G401 (cell line): ENCODE measurements at regions of chr15 and their contacts with region 1.

Region 1: DNA sequence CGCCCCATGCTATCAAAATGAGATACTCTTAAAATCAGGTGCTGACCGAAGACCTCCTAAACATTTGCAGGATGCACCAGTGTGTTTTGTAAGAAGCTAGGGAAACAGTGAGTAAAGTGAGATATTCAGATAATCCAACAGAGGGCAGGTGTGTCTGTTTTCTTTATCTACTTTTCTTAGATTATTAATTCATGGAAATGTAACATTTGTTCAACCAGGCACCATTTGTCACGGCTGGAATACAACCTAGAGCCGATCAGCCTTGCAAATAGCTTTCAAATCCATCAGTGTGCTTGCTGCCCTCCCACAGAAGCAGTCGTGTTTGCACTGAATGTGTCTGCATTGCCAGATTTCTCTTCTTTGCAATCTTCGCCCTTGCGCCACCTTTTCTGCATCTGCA is 201.9 kb upstream of the CHRM5 start:
- DNase-seq: no peak

Region 2: GRCh38 chr15:33693166-33693800 is 73.1 kb before region 1 on chr15:
- in situ Hi-C with region 1: no loop called
- DNase-seq: no peak

Region 3: DNA sequence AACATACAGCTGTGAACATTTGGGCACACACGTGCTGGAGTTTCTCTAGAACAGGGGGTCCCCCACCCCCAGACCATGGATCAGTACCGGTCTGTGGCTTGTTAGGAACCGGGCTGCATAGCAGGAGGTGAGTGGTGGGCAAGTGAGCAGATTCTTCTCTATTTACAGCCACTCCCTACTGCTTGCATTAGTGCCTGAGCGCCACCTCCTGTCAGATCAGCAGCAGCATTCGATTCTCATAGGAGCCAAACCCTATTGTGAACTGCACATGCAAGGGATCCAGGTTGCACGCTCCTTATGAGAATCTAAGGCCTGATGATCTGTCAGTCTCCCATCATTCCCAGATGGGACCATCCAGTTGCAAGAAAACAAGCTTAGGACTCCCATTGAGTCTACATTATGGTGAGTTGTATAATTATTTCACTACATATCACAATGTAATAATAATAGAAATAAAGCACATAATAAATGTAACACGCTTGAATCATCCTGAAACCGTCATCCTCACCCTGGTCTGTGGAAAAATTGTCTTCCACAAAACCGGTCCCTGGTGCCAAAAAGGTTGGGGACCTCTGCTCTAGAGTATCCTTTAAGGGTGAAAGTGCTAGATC is 227.7 kb after region 1 on chr15:
- in situ Hi-C with region 1: loop called (anchors 25 kb)
- DNase-seq: peak; percentile 10